Activated T-helper 2 cell treated with anti-CD3 and anti-CD28 coated beads, Interferon-gamma antibody, Interleukin-2, Interleukin-4, amounts not matched to agents 10 μg/mL and 5 μg/mL and 100 μg/mL, durations not matched to agents 14 hours and 24 hours and 36 hours (primary cell): ENCODE measurements at regions of chr10 and their contacts with region 1.

Region 1: GRCh38 chr10:27099916-27100812 is at the start of gene ANKRD26:
- DNase-seq: peak; percentile 95
- H3K4me3 Mint-ChIP-seq: peak within 1 kb of the TSS; percentile 85
- H3K27ac Mint-ChIP-seq: peak within 1 kb of the TSS; percentile 91
- H3K4me1 Mint-ChIP-seq: peaks cover 34% of the 10 kb centered on the region
- H3K27me3 Mint-ChIP-seq: peaks cover 2% of the 10 kb centered on the region
- total RNA-seq, gene ANKRD26: 5.5 and 6.5 TPM in 2 replicates

Region 2: DNA sequence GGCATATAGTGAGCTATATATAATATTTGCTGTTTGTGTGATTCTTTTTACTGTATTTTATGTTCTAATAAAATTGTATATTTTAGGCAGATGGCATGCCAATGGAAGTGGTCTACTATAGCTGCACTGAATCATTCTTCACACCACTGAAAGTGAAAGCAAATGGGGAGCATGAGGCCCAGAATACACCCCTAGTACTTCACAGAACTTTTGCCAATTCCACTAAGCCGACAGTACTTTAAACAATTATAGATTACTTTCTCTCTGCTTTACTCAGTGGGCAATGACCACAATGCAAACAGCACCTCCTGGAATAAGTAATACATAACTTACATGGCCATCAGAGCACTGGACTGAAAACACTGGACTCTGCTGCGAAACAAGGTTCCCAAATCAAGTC is 70.1 kb before region 1 on chr10:
- intact Hi-C with region 1: loop called (anchors 10 kb)
- DNase-seq: no peak
- H3K4me3 Mint-ChIP-seq: no peak overlapping the region
- H3K27ac Mint-ChIP-seq: no peak overlapping the region
- H3K4me1 Mint-ChIP-seq: peaks cover 23% of the 10 kb centered on the region
- H3K27me3 Mint-ChIP-seq: no peaks in the 10 kb centered on the region

Region 3: DNA sequence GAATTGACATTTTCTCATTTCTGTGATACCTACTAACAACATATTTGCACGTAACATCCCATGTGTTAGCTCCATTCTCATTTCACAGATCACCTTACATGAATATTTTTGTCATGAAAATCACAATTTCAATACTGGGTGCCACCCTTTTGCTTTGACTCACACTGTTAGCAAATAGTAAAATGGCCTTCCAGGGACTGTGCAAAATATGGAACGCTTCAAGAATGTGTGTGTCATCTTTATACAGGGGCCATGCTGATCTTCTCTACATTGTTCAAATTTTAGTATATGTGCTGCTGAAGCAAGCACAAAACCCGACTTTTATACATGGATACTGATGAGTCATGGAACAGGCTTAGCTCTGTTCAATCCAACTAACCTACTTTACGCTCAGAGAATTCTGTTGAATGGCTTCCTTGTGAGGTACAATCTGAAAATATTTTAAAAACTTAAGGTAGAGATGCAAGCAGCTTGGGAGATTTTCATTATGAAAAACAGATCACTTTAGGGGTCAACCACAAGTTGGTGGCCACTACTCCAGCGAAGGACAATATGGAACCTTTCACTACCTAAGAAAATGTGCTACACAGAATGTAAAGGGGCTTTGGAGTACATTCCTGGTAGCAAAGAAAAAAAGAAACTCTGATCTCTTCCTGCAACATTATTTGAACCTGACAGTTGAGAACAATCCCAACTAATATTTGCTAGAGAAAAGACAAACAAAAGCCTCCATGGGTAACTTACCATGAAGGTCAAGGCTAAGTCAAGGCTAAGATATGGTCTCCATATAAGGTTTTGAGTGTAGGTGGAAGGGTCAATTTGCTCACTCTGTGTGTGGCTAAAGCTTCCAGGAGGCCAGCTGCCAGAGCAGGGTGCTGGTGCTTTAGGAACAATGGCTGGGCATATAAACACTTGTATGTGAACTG is 11.8 kb before region 1 on chr10:
- intact Hi-C with region 1: no loop called
- DNase-seq: no peak
- H3K4me3 Mint-ChIP-seq: no peak overlapping the region
- H3K27ac Mint-ChIP-seq: no peak overlapping the region
- H3K4me1 Mint-ChIP-seq: no peaks in the 10 kb centered on the region
- H3K27me3 Mint-ChIP-seq: no peaks in the 10 kb centered on the region